CD4-positive, alpha-beta T cell (primary cell): ENCODE measurements at regions of chr11 and their contacts with region 1.

Region 1: GRCh38 chr11:61392981-61393595 is 701 bp downstream of the TMEM216 start:
- DNase-seq: peak in 9 of 14 experiments; percentile 3 to 65 (median 14)
- ATAC-seq: peak; percentile 59
- H3K4me3 ChIP-seq: peak overlapping the region; percentile 76
- H3K4me3 Mint-ChIP-seq: peak overlapping the region; percentile 98
- H3K27ac ChIP-seq: peak overlapping the region; percentile 79 to 89
- H3K27ac Mint-ChIP-seq: peak overlapping the region; percentile 99
- H3K4me1 ChIP-seq: peaks cover 28% of the 10 kb centered on the region
- H3K4me1 Mint-ChIP-seq: peaks cover 23% of the 10 kb centered on the region
- H3K27me3 ChIP-seq: no peaks in the 10 kb centered on the region
- H3K27me3 Mint-ChIP-seq: no peaks in the 10 kb centered on the region
- CTCF ChIP-seq: peak; percentile 51

Region 2: GRCh38 chr11:61254403-61255025 is 138.6 kb before region 1 on chr11:
- CTCF ChIA-PET with region 1: no interaction called
- POLR2A ChIA-PET with region 1: no interaction called
- intact Hi-C with region 1: loop called in 1 of 2 experiments (anchors 10 kb)
- DNase-seq: peak; percentile 32 to 74 (median 44)
- ATAC-seq: peak; percentile 77
- H3K4me3 ChIP-seq: no peak overlapping the region
- H3K4me3 Mint-ChIP-seq: no peak overlapping the region
- H3K27ac ChIP-seq: no peak overlapping the region
- H3K27ac Mint-ChIP-seq: no peak overlapping the region
- H3K4me1 ChIP-seq: peaks cover 3% of the 10 kb centered on the region
- H3K4me1 Mint-ChIP-seq: no peaks in the 10 kb centered on the region
- H3K27me3 ChIP-seq: no peaks in the 10 kb centered on the region
- H3K27me3 Mint-ChIP-seq: no peaks in the 10 kb centered on the region
- CTCF ChIP-seq: peak; percentile 70

Region 3: DNA sequence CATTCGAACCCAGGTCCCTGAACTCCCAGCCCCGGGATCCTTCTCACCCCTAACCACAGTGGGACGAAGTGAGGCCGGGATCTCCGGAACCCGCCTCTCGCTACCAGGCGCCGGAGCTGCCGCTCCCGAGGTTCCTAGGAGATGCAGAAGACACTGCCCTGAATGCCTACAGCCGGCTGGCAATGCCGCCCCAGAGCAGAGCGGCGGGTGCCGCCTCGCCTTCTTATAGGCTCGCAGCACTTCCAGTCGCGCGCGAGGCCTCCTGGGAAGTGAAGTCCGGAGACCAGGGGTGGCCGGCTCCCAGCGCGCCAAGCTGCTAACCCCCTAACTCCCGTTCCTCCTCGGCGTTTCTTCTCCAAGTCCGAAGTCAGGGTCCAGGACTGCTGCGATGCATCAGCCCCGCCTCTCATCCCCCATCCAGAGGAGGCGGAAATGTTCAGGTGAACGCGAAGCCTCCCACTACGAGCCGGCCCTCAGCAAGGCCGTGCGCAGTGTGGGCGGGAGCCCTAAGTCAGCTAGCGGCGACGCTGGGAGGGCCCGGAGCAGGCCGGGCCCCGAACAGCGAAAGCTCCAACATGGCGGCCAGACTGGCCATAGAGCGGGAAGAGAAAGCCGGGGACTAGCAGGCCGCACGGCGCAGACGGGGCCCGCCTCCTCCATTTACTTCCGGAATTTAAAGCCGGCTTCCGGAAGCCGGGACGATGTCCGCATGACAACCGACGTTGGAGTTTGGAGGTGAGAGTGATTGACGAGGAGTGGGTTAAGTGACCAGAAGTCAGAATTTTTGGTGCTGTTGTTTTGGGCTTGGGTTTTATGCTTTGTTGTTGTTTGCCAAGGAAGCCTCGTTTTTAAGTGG is 31.2 kb before region 1 on chr11 and contains the starts of genes CYB561A3 and TMEM138:
- CTCF ChIA-PET with region 1: interaction called, 8 read pairs
- POLR2A ChIA-PET with region 1: interaction called, 44 read pairs
- intact Hi-C with region 1: no loop called
- DNase-seq: peak; percentile 75 to 94 (median 82)
- ATAC-seq: peak; percentile 84
- H3K4me3 ChIP-seq: peak within 1 kb of the TSS; percentile 99
- H3K4me3 Mint-ChIP-seq: peak within 1 kb of the TSS; percentile 99
- H3K27ac ChIP-seq: peak within 1 kb of the TSS; percentile 95 to 100
- H3K27ac Mint-ChIP-seq: peak within 1 kb of the TSS; percentile 100
- H3K4me1 ChIP-seq: peaks cover 35% of the 10 kb centered on the region
- H3K4me1 Mint-ChIP-seq: peaks cover 36% of the 10 kb centered on the region
- H3K27me3 ChIP-seq: no peaks in the 10 kb centered on the region
- H3K27me3 Mint-ChIP-seq: no peaks in the 10 kb centered on the region
- CTCF ChIP-seq: no peak
- total RNA-seq, gene CYB561A3: 24.4 to 25.8 TPM
- total RNA-seq, gene TMEM138: 59.2 to 60.9 TPM

Region 4: GRCh38 chr11:61460474-61460881 is 67.4 kb after region 1 on chr11:
- CTCF ChIA-PET with region 1: no interaction called
- POLR2A ChIA-PET with region 1: no interaction called
- intact Hi-C with region 1: no loop called
- DNase-seq: no peak
- ATAC-seq: no peak
- H3K4me3 ChIP-seq: no peak overlapping the region
- H3K4me3 Mint-ChIP-seq: no peak overlapping the region
- H3K27ac ChIP-seq: no peak overlapping the region
- H3K27ac Mint-ChIP-seq: no peak overlapping the region
- H3K4me1 ChIP-seq: no peaks in the 10 kb centered on the region
- H3K4me1 Mint-ChIP-seq: no peaks in the 10 kb centered on the region
- H3K27me3 ChIP-seq: no peaks in the 10 kb centered on the region
- H3K27me3 Mint-ChIP-seq: no peaks in the 10 kb centered on the region
- CTCF ChIP-seq: no peak

Region 5: DNA sequence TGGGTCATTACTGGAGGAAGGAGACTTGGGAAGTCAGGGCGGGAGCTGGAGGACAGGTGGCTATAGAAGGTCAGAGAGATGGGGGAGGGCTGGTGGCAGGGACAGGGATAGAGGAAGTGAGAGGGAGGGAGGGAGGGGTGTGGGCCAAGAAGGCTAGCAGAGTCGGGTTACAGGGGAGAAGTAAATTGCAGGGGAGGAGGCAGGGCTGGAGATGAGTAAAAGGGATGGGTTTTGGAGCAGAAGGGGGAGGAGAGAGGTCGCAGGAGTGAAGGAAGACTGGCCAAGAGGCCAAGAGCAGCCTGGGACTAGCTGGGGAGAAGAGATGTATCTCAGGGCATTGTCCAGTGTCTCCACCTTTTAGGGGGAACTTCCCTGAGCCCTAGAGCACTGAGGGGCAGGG is 148.5 kb after region 1 on chr11:
- CTCF ChIA-PET with region 1: no interaction called
- POLR2A ChIA-PET with region 1: no interaction called
- intact Hi-C with region 1: no loop called
- DNase-seq: no peak
- ATAC-seq: no peak
- H3K4me3 ChIP-seq: no peak overlapping the region
- H3K4me3 Mint-ChIP-seq: no peak overlapping the region
- H3K27ac ChIP-seq: no peak overlapping the region
- H3K27ac Mint-ChIP-seq: no peak overlapping the region
- H3K4me1 ChIP-seq: no peaks in the 10 kb centered on the region
- H3K4me1 Mint-ChIP-seq: no peaks in the 10 kb centered on the region
- H3K27me3 ChIP-seq: peaks cover 5 to 10% of the 10 kb centered on the region in 2 experiments
- H3K27me3 Mint-ChIP-seq: peaks cover 16% of the 10 kb centered on the region
- CTCF ChIP-seq: no peak

Region 6: DNA sequence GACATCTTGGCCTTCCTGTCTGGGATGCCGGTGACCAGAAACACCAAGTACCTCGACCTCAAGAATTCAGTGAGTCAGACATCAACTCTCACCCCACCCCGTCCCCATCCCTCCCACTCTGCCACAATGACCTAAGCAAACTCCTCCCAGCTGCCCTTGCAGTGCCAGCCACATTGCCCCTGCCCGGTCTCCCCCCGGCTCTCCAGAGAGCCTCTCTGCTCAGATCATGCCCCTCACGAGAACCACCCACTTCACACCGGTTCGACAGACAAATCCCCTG is 335.8 kb after region 1 on chr11:
- CTCF ChIA-PET with region 1: no interaction called
- POLR2A ChIA-PET with region 1: no interaction called
- intact Hi-C with region 1: no loop called
- DNase-seq: no peak
- ATAC-seq: no peak
- H3K4me3 ChIP-seq: no peak overlapping the region
- H3K4me3 Mint-ChIP-seq: no peak overlapping the region
- H3K27ac ChIP-seq: no peak overlapping the region
- H3K27ac Mint-ChIP-seq: no peak overlapping the region
- H3K4me1 ChIP-seq: peaks cover 7% of the 10 kb centered on the region
- H3K4me1 Mint-ChIP-seq: peaks cover 4% of the 10 kb centered on the region
- H3K27me3 ChIP-seq: no peaks in the 10 kb centered on the region
- H3K27me3 Mint-ChIP-seq: no peaks in the 10 kb centered on the region
- CTCF ChIP-seq: no peak